HEK293 (cell line): ENCODE measurements at regions of chr13 and their contacts with region 1.

Region 1: GRCh38 chr13:46592336-46592735 is 39.4 kb downstream of the LRCH1 start:
- H3K4me3 ChIP-seq: no peak overlapping the region
- H3K27ac ChIP-seq: no peak overlapping the region
- H3K4me1 ChIP-seq: peaks cover 22% of the 10 kb centered on the region
- CTCF ChIP-seq: no peak

Region 2: GRCh38 chr13:46603165-46603603 is 10.8 kb after region 1 on chr13:
- CTCF ChIA-PET with region 1: interaction called, 12 read pairs
- POLR2A ChIA-PET with region 1: no interaction called
- H3K4me3 ChIP-seq: no peak overlapping the region
- H3K27ac ChIP-seq: no peak overlapping the region
- H3K4me1 ChIP-seq: peaks cover 8% of the 10 kb centered on the region
- CTCF ChIP-seq: no peak